ENCODE measurements at regions of chr12 and their contacts with region 1.

Region 1: DNA sequence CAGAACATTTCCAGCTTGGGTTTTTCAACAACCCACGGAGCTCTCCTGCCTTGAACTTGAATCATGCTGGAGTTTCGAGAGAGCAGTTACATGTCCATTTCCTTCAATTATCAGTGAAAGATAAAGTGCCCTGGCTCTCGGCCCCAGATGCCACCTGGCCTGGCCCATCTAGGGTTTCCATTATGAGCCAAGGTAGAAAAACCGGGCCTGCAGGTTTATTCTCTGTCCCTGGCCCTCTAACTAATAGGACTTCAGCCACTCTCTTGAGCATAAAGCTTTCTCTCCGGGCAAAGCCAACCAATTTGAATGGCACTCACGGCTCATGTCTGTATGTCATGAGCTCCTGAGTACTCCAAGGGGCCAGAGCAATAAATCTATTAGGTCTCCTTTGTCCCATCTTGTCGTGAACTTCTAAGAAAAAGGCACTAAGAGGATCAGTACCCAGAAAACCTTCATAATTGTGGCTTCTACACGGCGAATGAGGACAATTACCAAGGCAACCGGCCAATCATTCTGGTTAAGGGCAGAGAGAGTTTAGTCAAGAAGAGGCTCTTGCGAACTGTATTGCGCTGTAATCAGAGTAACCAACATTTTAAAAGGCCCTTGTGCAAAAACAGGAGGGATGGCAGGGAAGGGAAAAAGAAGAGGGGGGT is 392.3 kb downstream of the MED13L start:
- DNase-seq: no peak
- H3K4me3 ChIP-seq: no peak overlapping the region
- CTCF ChIP-seq: no peak

Region 2: DNA sequence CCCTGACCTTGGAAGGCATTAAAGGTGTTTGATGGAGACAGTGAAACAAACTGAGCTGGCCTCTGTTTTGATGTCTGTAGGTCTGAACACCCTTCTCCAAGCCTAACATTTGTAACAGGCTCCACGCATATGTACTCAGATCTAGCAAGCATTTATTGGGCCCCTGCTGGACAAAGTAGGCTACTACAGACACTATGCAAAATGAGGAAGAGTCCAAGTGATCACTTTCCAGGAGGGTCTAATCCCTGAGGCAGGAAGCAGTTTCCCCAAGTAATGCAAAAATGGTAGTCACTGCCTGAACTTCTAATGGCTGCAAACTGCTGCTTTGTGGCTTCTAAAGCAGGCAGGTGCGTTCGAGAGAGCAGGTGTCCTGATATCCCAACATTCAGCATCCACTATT is 13.4 kb before region 1 on chr12:
- CTCF ChIA-PET with region 1: interaction called, 12 read pairs
- POLR2A ChIA-PET with region 1: no interaction called
- DNase-seq: no peak
- H3K4me3 ChIP-seq: no peak overlapping the region
- CTCF ChIP-seq: peak; percentile 63

Region 3: DNA sequence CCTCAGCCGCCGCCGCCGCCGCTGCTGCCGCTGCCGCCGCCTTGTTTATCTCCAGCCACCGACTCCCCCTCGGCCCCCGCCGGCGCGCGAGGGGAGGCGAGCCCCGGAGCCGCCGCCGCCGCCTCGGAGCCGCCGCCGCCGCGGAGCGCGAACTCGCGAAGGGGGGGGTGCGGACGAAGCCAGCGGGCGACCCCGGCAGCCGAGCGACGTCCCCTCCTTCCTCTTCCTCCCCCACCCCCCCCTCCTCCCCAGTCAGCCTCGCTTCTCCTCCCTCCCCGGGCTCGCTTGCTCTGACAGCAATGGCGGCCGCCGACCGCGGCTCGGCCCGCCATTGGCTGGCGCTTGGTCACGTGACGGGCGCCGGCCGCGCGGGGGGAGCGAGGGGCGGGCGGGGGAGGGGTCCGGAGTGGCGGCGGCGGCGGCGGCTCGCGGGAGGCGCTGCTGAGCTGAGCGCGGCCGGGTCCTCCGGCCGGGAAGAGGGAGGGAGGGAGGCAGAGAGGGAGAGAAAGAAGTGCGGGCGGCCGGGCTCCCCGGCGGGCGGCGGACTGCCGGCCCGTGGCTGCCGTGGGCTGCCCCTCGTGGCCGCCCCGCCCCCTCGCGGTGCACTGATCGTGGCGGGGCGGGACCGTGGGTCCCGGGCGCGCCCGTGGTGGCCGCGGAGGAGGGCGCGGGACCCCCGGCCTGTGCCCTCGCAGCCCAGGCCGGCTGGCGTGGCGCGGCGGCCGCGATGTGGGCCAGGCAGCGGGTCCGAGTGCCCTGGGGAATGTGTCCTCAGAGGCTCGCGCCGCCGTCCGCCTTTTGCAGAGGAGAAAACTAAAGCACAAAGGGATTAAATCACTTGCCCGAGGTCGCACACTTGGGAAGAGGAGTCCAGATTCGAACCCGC is 392.5 kb after region 1 on chr12 and contains the start of gene MED13L:
- CTCF ChIA-PET with region 1: no interaction called
- POLR2A ChIA-PET with region 1: no interaction called
- DNase-seq: no peak
- H3K4me3 ChIP-seq: peak within 1 kb of the TSS; percentile 86
- CTCF ChIP-seq: peak; percentile 50